Activated T-helper 2 cell treated with anti-CD3 and anti-CD28 coated beads, Interferon-gamma antibody, Interleukin-2, Interleukin-4, amounts not matched to agents 10 μg/mL and 5 μg/mL and 100 μg/mL, durations not matched to agents 14 hours and 24 hours and 36 hours (primary cell): ENCODE measurements at regions of chr2 and their contacts with region 1.

Region 1: GRCh38 chr2:74391580-74392448 is 11.7 kb upstream of the DCTN1 start:
- DNase-seq: peak; percentile 90
- H3K4me3 Mint-ChIP-seq: peak overlapping the region; percentile 92
- H3K27ac Mint-ChIP-seq: peak overlapping the region; percentile 98
- H3K4me1 Mint-ChIP-seq: peaks cover 9% of the 10 kb centered on the region
- H3K27me3 Mint-ChIP-seq: peaks cover 6% of the 10 kb centered on the region

Region 2: DNA sequence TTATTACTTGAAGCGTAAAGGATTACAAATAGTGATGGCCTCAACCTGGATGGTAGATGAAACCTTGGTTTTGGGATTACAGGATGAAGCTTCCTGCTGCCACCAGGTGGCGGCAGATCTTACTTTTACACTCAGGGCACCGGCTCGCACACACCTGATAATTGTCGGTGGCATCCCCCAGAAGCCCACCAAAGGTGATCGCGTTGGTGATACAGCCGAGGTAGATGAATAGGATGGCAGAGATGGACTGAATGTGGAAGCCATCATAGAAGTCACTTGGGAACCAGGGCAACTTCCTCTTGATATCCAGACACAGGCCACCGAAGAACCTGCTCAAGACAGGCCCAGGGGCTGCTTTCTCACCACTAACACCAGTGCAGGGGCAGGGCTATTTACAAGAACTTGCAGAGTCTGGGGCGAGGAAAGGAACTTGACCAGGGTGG is 141.6 kb before region 1 on chr2:
- intact Hi-C with region 1: loop called (anchors 5 kb)
- DNase-seq: peak; percentile 38
- H3K4me3 Mint-ChIP-seq: no peak overlapping the region
- H3K27ac Mint-ChIP-seq: no peak overlapping the region
- H3K4me1 Mint-ChIP-seq: no peaks in the 10 kb centered on the region
- H3K27me3 Mint-ChIP-seq: peaks cover 3% of the 10 kb centered on the region

Region 3: DNA sequence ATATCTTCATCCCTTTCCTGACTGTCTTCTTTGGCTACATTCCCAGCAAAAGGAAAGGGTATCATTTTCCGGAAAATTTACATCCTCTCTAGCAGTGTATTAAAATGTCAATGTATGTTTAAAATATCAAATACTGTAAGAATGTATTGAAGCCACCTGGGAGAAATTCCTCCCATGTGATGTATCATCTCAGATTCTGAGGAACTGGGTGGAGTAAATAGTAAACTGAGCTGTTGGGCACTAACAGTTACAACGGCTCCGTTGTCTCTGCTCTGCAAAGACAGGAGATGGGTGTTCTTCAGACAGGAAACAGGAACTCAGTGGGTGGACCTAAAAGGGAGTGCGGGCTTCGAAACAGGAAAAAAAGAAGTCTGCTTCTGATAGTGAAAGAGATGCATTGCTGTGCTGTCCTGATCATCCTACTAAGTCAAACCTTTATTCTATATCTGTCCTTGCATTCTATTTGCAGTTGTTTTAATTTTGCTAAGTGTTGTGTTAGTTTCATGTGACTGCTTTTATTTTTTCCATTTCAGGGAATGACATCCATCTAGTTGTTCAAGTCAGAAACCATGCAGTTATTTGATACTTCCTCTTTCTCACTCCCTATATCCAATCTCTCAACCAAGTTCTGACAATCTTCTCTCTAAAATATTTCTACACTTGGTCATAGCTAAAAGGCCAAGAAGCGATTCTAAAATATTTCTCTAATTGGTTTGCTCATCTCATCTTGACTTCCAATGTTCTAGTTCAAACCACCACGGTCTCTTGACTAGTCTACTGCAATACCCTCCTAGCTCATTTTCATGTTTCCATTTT is 182.1 kb after region 1 on chr2:
- intact Hi-C with region 1: no loop called
- DNase-seq: peak; percentile 45
- H3K4me3 Mint-ChIP-seq: peak overlapping the region; percentile 34
- H3K27ac Mint-ChIP-seq: peak overlapping the region; percentile 74
- H3K4me1 Mint-ChIP-seq: peaks cover 63% of the 10 kb centered on the region
- H3K27me3 Mint-ChIP-seq: no peaks in the 10 kb centered on the region